ENCODE measurements at regions of chr1 and their contacts with region 1.

Region 1: GRCh38 chr1:31910933-31911332 is 27.2 kb downstream of the PTP4A2 start:
- DNase-seq: peak; percentile 69
- H3K4me3 Mint-ChIP-seq: peak overlapping the region; percentile 9
- H3K27ac Mint-ChIP-seq: peak overlapping the region; percentile 74
- H3K4me1 Mint-ChIP-seq: peaks cover 58% of the 10 kb centered on the region
- H3K27me3 Mint-ChIP-seq: no peaks in the 10 kb centered on the region

Region 2: DNA sequence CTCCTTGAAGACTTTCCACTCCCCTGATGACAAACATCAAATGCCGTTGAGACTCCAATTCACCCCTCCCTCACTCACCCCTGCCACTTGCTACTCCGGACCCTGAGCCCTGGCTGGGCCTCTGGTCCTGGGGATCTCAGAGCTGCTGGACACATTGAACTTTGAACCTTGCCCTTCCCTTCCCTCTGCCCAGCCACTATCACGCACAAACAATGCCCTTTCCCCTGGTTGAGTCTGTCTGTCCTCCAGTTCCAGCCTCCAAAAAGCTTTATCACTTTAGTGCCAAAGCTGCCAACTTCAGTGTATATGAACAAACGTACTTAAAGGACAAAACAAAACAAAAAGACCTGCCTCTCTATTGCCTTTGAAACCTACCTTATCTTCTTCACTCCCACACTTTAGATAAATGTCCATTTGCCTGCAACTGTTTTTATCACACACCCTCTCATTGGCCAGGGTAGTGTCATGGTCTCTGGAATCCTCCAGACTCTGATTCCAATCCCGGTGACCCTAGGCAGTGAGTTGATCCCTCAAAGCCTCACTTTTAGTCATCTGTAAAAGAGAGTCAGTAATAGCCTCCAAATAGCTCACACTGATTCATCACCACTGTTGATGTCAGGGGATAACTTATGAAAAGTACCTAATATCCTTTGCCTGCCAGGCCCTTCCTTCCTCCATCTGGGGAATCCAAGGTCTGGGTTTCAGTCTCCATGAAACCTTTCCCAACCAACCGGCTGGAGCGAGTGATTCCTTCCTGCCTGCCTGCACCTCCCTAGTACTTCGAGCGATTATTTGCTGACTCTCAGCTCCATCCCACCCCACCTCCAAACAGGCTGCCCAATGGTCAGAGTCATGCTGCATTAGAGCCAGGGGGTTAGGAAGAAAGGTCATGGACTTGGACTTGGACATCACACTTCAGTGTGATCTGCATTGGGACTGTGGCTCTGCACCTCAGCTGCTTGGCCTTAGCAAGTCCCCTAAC is 79.2 kb before region 1 on chr1:
- CTCF ChIA-PET with region 1: no interaction called
- intact Hi-C with region 1: loop called (anchors 1 kb)
- DNase-seq: no peak
- H3K4me3 Mint-ChIP-seq: no peak overlapping the region
- H3K27ac Mint-ChIP-seq: no peak overlapping the region
- H3K4me1 Mint-ChIP-seq: peaks cover 23% of the 10 kb centered on the region
- H3K27me3 Mint-ChIP-seq: no peaks in the 10 kb centered on the region

Region 3: GRCh38 chr1:31931593-31932225 is 20.8 kb after region 1 on chr1:
- CTCF ChIA-PET with region 1: interaction called, 5 read pairs
- intact Hi-C with region 1: loop called (anchors 1 kb)
- DNase-seq: no peak
- H3K4me3 Mint-ChIP-seq: peak overlapping the region; percentile 62
- H3K27ac Mint-ChIP-seq: peak overlapping the region; percentile 99
- H3K4me1 Mint-ChIP-seq: peaks cover 81% of the 10 kb centered on the region
- H3K27me3 Mint-ChIP-seq: no peaks in the 10 kb centered on the region